ENCODE measurements at regions of chr1 and their contacts with region 1.

Region 1: GRCh38 chr1:43529206-43529731 is 1.4 kb upstream of the PTPRF start:
- DNase-seq: peak; percentile 92
- ATAC-seq: peak; percentile 81

Region 2: GRCh38 chr1:43650310-43651085 is 121.2 kb after region 1 on chr1:
- intact Hi-C with region 1: loop called (anchors 10 kb)
- DNase-seq: peak; percentile 96
- ATAC-seq: peak; percentile 95

Region 3: DNA sequence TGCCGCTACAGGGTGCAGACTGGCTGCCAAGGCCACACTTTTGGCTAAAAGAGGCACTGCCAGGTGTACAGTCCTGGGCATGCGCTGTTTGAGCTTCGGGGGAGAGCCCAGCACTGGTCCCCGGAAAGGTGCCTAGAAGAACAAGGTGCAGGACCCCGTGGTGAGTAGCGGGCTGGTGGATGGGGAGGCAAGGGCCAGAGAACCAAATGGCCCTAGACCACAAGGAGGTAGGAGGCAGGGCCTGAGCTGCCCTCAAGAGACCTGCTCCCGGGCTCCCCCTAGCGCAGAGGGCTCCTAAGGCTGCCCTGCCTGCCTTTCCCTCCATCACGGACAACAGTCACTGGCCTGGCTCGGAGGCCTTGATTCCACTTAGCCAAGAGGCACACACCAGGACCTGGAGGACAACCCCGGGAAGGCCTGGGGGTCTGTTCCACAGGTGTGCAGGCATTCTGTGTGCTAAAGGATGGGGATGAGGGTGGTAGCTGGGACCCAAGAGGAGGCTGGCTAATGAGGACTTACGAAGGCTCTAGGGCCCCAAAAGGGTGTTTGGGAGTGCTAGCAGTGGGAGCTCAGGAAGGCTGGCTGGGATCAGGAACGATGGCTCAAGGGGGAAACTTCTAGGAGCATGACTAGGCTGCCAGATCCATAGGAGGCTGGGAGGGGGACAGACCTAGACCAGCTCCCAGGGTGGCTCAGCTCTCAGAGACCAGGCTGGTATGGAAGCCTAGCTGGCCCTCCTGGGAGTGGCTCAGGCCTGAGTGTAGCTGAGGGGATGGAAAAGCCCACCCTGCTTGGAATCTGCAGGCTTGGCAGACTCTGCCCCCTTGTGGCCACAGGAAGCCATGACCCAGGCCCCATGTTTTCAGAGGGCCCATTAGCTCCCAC is 405.1 kb after region 1 on chr1:
- intact Hi-C with region 1: loop called (anchors 10 kb)
- DNase-seq: peak; percentile 70
- ATAC-seq: peak; percentile 69

Region 4: DNA sequence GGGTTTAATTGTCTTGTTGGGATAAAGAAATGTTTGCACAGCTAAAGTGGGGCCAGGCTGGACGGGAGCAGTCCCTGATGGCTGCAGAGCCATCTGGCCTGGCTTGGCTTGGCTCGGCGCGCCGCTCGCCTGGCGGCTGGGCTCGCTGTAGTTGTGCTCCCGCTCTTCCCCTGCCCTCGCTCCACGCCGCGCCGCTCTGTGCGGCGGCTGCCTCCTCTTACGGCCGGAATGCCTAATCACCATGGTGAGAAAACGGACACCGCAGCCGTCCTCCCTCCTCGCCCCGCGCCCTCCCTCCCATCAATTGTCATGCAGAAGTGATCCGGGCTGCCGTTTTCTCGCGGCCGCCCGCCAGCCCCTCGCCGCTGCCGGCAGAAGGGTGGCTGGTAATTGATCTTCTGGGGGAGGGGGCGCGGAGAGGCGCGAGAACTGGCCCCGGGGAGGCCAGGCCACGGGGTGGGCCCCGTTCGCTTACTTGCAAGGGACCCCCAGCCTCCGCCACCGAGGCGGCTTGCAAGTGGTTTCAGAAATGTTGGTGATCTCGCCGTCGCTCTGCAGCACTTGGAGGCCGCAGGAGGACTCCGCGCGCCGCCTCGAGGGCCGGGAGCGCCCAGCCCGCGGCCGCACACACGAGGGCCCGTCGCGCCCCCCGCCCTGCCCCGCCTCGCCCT is 888.2 kb after region 1 on chr1:
- intact Hi-C with region 1: no loop called
- DNase-seq: peak; percentile 68
- ATAC-seq: peak; percentile 81

Measured in sciatic nerve (tissue), 2 donors.